PC-3 (cell line): ENCODE measurements at regions of chr10 and their contacts with region 1.

Region 1: DNA sequence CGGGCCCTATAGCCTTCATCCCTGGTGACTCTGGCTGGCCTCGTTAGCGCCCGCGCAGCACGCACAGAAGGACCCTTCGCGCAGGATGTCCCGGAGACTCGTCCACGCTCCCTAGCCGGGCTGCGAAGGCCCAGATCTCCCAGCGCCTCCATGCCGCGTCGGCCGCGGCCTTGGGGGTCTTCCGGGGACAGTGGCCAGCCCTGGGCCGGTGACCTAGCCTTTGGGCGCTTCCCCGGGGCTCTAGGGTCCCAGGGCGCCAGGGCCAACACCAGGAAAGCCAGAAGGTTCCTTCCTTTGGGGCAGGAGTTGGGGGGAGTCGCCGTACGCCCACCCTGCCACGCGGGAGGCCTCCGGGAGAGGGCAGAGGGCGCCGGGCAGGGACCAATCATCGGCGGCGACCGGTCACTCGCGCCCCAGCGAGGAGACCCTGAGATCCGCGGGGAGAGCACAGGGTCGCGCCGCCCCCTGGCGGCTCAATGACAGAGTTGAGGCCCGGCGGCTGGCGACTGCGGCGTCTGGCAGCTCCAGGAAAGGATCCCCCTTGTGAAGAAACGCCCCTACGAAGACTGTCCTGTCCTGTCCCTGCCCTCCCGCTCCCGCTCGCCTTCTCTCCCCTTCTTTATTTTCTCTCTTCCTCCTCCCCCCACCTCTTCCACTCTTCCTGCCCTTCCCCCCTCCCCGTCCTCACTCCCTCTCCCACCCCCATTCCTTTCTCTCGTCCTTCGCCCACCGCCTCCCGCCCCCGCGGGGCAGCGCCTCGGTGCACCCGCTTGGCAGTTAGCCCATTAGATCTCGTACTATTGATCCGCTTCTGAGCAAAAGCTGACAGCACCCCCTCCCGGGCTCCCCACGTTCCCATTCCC is 62.3 kb upstream of the LBX1 start:
- DNase-seq: peak; percentile 19
- ATAC-seq: peak; percentile 59
- H3K4me3 ChIP-seq: peak overlapping the region; percentile 69
- H3K27ac ChIP-seq: no peak overlapping the region
- H3K4me1 ChIP-seq: no peaks in the 10 kb centered on the region
- H3K27me3 ChIP-seq: no peaks in the 10 kb centered on the region
- CTCF ChIP-seq: peak; percentile 52

Region 2: DNA sequence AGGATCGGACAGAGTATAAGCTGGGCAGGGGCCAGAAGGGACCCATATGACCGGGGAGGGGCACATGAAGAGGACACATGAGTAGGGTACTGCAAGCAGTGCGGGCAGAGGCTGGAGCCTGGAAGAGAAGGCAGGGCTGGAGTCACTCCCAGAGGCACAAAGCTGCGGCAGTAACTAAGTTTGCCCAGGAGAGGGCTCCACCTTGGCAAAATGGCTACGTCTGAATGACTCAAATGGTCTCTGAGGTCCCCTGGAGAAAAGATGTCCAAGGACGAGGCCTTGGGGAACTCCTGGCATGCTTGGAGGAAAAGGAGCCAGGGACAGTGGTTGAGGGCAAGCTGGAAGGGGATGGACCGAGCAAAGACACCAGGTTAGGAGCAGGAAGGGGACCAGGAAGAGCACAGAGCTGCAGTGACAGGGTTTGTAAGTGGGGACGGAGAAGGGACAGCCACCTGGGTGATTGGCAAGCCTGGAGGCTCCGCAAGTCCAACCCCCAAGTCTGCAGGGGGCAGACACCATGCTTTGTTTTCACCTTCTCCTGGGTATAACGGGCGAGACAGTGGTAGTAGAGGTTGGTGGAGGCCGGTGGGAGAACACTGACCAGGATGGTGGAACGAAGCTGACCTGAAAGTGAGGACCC is 19.2 kb before region 1 on chr10:
- CTCF ChIA-PET with region 1: no interaction called
- POLR2A ChIA-PET with region 1: no interaction called
- intact Hi-C with region 1: loop called (anchors 1 kb)
- DNase-seq: peak; percentile 68
- ATAC-seq: peak; percentile 76
- H3K4me3 ChIP-seq: no peak overlapping the region
- H3K27ac ChIP-seq: no peak overlapping the region
- H3K4me1 ChIP-seq: no peaks in the 10 kb centered on the region
- H3K27me3 ChIP-seq: no peaks in the 10 kb centered on the region
- CTCF ChIP-seq: peak; percentile 68

Region 3: DNA sequence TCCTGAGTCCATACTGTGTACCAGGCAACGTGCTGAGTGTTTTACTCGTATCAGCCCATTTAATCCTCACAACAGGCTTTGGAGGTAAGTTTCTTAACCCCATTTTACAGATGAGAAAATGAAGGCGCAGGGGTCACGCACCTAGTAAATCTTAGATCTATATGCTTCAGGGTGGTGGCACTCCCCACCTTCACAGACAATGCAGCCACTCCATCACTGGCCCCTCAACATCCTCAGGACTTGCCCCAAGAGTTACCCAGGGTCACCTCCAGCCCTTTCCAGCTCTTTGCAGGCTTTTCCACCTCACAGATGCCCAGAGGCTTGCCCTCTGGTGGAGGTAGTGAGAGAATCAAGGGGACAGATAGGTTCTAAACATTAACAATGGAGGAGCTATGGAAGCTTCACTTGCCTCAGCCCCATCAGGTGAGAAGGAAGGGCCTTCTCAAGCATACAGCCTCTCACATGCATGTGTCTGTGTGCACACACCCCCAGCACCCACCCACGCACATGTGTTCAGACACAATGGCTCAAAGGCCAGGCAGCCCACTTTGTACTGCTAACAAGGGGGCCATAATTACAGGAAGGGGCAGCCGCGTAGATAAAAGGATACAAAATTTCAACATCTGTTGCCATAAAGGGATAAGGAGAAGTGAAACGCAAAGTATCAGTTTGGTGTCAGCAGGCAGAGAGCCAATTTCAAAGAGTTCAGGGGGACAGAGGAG is 325.7 kb after region 1 on chr10:
- CTCF ChIA-PET with region 1: no interaction called
- POLR2A ChIA-PET with region 1: no interaction called
- intact Hi-C with region 1: no loop called
- DNase-seq: no peak
- ATAC-seq: no peak
- H3K4me3 ChIP-seq: no peak overlapping the region
- H3K27ac ChIP-seq: no peak overlapping the region
- H3K4me1 ChIP-seq: no peaks in the 10 kb centered on the region
- H3K27me3 ChIP-seq: no peaks in the 10 kb centered on the region
- CTCF ChIP-seq: 0 out of 2 replicates have a peak, but pooled peaks have one; percentile 13